ENCODE measurements at regions of chr7 and their contacts with region 1.

Region 1: DNA sequence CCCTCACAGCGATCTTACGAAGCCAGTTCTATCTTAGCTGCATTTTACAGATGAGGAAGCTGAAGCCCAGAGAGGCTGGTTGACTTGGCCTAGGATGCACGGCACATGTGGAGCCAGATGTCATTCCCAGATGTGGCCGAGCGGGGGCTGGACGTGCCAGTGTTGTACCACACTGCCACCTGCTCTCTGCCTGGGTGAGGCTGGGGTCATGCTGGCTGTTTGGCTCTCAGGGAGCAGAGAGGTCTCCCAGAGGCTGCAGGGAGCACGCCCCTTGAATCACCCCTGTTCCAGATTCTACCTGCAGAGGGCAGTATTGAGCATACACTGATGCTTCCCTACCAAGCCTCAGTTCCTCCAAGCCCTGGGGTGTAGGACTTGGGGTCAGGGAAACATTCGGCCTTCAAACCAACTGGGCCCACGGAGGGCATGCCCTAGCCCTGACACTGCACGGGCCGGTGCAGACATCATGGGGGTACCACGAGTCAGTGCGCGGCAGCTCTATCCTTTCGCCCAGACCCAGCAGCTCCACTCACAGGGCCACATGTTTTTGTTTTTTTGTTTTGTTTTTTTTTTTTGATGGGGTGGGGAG is 3.8 kb upstream of the GTF2IRD1 start:
- DNase-seq: peak; percentile 68 to 76
- ATAC-seq: peak; percentile 56 to 68; a peak in 4 of 6 replicates
- H3K4me3 ChIP-seq: no peak overlapping the region
- H3K27ac ChIP-seq: peak overlapping the region; percentile 30 to 42; a peak in 4 of 6 replicates
- H3K4me1 ChIP-seq: peaks cover 10% of the 10 kb centered on the region
- CTCF ChIP-seq: peak; percentile 70
- EP300 ChIP-seq: no peak
- POLR2A ChIP-seq: no peak
- RAD21 ChIP-seq: peak; percentile 65 to 69

Region 2: GRCh38 chr7:74474271-74474865 is 24.5 kb after region 1 on chr7:
- CTCF ChIA-PET with region 1: interaction called, 11 read pairs
- POLR2A ChIA-PET with region 1: no interaction called
- DNase-seq: no peak
- ATAC-seq: no peak
- H3K4me3 ChIP-seq: no peak overlapping the region
- H3K27ac ChIP-seq: peak overlapping the region; percentile 93 to 97
- H3K4me1 ChIP-seq: peaks cover 63% of the 10 kb centered on the region
- CTCF ChIP-seq: no peak
- EP300 ChIP-seq: no peak
- POLR2A ChIP-seq: no peak
- RAD21 ChIP-seq: no peak

Region 3: DNA sequence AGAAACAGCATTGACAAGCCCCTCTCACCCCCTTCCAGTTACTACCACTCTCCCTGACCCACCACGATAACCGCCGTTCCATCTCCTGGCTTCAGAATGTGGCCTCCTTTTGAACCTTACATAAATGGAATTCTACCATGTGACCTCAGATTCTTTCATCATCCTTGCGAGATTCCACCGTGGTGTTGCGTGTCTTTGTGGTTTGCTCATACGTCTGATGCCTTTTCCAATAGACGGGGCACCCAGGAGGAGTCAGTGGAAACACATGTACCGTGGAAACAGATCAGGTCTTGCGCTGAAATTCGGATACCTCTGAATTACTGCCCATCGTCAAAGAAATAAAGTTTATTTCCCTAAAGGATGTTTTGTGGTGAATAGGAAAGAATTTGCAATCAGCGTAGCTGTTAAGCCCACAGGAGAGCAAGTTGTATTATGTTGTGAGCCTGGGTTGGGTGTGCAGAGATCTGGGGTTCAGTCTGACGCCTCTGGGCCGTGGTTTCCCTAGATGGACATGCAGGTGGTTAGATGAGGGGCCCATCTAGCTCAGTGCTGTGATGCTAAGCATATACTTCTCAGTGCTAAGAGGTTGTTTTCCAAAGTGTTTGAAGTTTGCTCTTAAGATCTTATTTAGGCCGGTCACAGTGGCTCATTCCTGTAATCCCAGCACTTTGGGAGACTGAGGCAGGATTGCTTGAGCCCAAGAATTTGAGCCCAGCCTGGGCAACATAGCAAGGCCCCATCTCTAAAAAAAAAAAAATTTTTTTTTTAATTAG is 32.9 kb after region 1 on chr7:
- CTCF ChIA-PET with region 1: interaction called, 11 read pairs
- POLR2A ChIA-PET with region 1: no interaction called
- DNase-seq: peak; percentile 83 to 94
- ATAC-seq: peak; percentile 45 to 48
- H3K4me3 ChIP-seq: no peak overlapping the region; the same call in 2 of the 3 replicates
- H3K27ac ChIP-seq: peak overlapping the region; percentile 93 to 97
- H3K4me1 ChIP-seq: peaks cover 77% of the 10 kb centered on the region
- CTCF ChIP-seq: no peak
- EP300 ChIP-seq: peak; percentile 72 to 92; a peak in 3 of 5 replicates
- POLR2A ChIP-seq: no peak
- RAD21 ChIP-seq: 0 out of 5 replicates have a peak, but pooled peaks of 1 of the 2 experiments have one; percentile 14